GM18951 (cell line): ENCODE measurements at regions of chr15 and their contacts with region 1.

Region 1: DNA sequence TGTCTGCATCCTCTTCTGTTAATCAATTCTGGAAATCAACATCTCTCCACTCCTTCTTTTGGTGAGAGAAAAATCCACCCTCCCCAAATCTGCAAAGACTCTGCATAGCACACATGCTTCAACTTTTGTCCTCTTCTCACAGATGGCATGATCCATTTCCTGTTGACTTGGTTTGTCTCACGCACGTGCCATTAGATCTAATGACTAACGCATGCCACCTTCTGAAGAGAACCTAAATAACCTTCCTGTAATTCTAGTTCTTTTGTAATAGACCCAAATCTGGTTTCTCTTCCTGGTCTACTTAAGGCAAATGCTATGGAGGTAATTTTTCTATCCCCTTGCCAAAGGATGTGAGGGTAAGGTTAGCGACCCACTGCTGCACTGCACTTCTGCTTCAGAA is 51.0 kb upstream of the ATOSA start:
- POLR2A ChIP-seq: no peak

Region 2: GRCh38 chr15:52246686-52247431 is 483.3 kb before region 1 on chr15:
- in situ Hi-C with region 1: loop called (anchors 5 kb)
- POLR2A ChIP-seq: no peak

Region 3: GRCh38 chr15:52349052-52349700 is 381.0 kb before region 1 on chr15:
- in situ Hi-C with region 1: loop called (anchors 10 kb)
- POLR2A ChIP-seq: no peak